Naive thymus-derived CD4-positive, alpha-beta T cell (primary cell): ENCODE measurements at regions of chr17 and their contacts with region 1.

Region 1: GRCh38 chr17:57747221-57748017 is 2.3 kb upstream of the CCDC182 start:
- DNase-seq: peak in 8 of 9 donors; percentile 18 to 65 (median 50)
- ATAC-seq: peak; percentile 66
- H3K4me3 ChIP-seq: no peak overlapping the region
- H3K4me3 Mint-ChIP-seq: no peak overlapping the region
- H3K27ac ChIP-seq: no peak overlapping the region
- H3K27ac Mint-ChIP-seq: peak overlapping the region in 1 of 9 donors; percentile 2
- H3K4me1 ChIP-seq: no peaks in the 10 kb centered on the region
- H3K4me1 Mint-ChIP-seq: peaks cover 0 to 6% (median 0%) of the 10 kb centered on the region in 7 donors
- H3K27me3 ChIP-seq: no peaks in the 10 kb centered on the region
- H3K27me3 Mint-ChIP-seq: peaks cover 0 to 15% (median 4%) of the 10 kb centered on the region in 5 donors

Region 2: GRCh38 chr17:57130761-57131461 is 616.5 kb before region 1 on chr17:
- CTCF ChIA-PET with region 1: interaction called, 4 read pairs
- POLR2A ChIA-PET with region 1: no interaction called
- intact Hi-C with region 1: loop called (anchors 1 to 2 kb)
- DNase-seq: peak; percentile 53 to 82 (median 75)
- ATAC-seq: peak; percentile 96
- H3K4me3 ChIP-seq: no peak overlapping the region
- H3K4me3 Mint-ChIP-seq: peak overlapping the region in 5 of 10 donors; percentile 14 to 53 (median 46)
- H3K27ac ChIP-seq: no peak overlapping the region
- H3K27ac Mint-ChIP-seq: no peak overlapping the region
- H3K4me1 ChIP-seq: peaks cover 0 to 6% of the 10 kb centered on the region in 2 donors
- H3K4me1 Mint-ChIP-seq: peaks cover 4 to 11% (median 8%) of the 10 kb centered on the region in 7 donors
- H3K27me3 ChIP-seq: no peaks in the 10 kb centered on the region
- H3K27me3 Mint-ChIP-seq: no peaks in the 10 kb centered on the region

Region 3: GRCh38 chr17:57552114-57552624 is 195.2 kb before region 1 on chr17:
- CTCF ChIA-PET with region 1: interaction called, 3 read pairs
- POLR2A ChIA-PET with region 1: no interaction called
- intact Hi-C with region 1: loop called in 1 of 2 experiments (anchors 1 kb)
- DNase-seq: peak in 4 of 9 donors; percentile 11 to 40 (median 20)
- ATAC-seq: peak; percentile 41
- H3K4me3 ChIP-seq: no peak overlapping the region
- H3K4me3 Mint-ChIP-seq: peak overlapping the region in 6 of 10 donors; percentile 24 to 62 (median 38)
- H3K27ac ChIP-seq: no peak overlapping the region
- H3K27ac Mint-ChIP-seq: peak overlapping the region in 7 of 9 donors; percentile 13 to 81 (median 59)
- H3K4me1 ChIP-seq: peaks cover 4 to 19% of the 10 kb centered on the region in 2 donors
- H3K4me1 Mint-ChIP-seq: peaks cover 20 to 74% (median 61%) of the 10 kb centered on the region in 7 donors
- H3K27me3 ChIP-seq: no peaks in the 10 kb centered on the region
- H3K27me3 Mint-ChIP-seq: no peaks in the 10 kb centered on the region

Region 4: GRCh38 chr17:57597531-57598453 is 149.6 kb before region 1 on chr17:
- CTCF ChIA-PET with region 1: interaction called, 9 read pairs
- POLR2A ChIA-PET with region 1: no interaction called
- intact Hi-C with region 1: loop called (anchors 1 to 5 kb)
- DNase-seq: peak in 2 of 9 donors; percentile 14 to 19
- ATAC-seq: peak; percentile 55
- H3K4me3 ChIP-seq: no peak overlapping the region
- H3K4me3 Mint-ChIP-seq: peak overlapping the region in 5 of 10 donors; percentile 15 to 69 (median 25)
- H3K27ac ChIP-seq: peak overlapping the region; percentile 34
- H3K27ac Mint-ChIP-seq: peak overlapping the region; percentile 66 to 97 (median 94)
- H3K4me1 ChIP-seq: peaks cover 48 to 53% of the 10 kb centered on the region in 2 donors
- H3K4me1 Mint-ChIP-seq: peaks cover 44 to 65% (median 55%) of the 10 kb centered on the region in 7 donors
- H3K27me3 ChIP-seq: no peaks in the 10 kb centered on the region
- H3K27me3 Mint-ChIP-seq: no peaks in the 10 kb centered on the region

Region 5: DNA sequence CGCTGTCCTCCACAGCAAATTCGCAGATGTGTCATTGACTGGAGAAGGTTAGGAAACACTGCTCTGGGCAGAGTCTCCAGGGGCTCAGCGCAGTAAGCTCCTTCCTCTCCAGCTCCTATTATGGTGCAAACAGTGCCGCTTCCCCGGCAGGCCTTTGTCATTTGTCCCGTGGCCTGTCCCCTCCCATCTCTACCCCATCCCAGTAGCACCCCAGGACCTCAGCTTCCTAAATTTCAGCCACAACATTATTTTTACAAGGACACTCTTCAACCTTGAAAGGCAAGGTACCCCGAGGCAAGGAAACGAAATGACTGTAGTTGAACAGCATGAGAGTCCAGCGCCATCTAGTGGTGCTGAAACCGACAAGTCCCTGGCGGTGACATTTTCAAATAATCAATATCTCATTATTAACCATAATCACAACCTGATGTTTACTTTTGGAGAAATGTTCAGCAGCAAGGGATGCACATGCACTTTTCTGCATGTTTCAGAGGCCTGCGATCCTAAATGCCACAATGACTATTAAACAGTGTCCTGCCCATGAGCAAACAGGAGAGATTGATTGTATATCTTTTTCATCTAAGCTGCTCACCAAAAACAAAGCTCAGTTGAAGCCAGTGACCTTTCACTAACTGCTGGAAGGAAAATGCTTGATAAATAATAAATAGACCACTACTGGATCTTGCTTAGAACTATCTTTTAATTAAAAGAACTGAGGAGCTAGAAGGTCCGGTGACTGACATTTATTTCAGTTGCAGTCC is 85.9 kb after region 1 on chr17:
- CTCF ChIA-PET with region 1: no interaction called
- POLR2A ChIA-PET with region 1: no interaction called
- intact Hi-C with region 1: loop called in 1 of 2 experiments (anchors 1 kb)
- DNase-seq: peak; percentile 29 to 68 (median 58)
- ATAC-seq: peak; percentile 86
- H3K4me3 ChIP-seq: peak overlapping the region; percentile 29
- H3K4me3 Mint-ChIP-seq: no peak overlapping the region
- H3K27ac ChIP-seq: peak overlapping the region; percentile 8
- H3K27ac Mint-ChIP-seq: no peak overlapping the region
- H3K4me1 ChIP-seq: no peaks in the 10 kb centered on the region
- H3K4me1 Mint-ChIP-seq: peaks cover 0 to 13% (median 4%) of the 10 kb centered on the region in 7 donors
- H3K27me3 ChIP-seq: no peaks in the 10 kb centered on the region
- H3K27me3 Mint-ChIP-seq: no peaks in the 10 kb centered on the region

Region 6: DNA sequence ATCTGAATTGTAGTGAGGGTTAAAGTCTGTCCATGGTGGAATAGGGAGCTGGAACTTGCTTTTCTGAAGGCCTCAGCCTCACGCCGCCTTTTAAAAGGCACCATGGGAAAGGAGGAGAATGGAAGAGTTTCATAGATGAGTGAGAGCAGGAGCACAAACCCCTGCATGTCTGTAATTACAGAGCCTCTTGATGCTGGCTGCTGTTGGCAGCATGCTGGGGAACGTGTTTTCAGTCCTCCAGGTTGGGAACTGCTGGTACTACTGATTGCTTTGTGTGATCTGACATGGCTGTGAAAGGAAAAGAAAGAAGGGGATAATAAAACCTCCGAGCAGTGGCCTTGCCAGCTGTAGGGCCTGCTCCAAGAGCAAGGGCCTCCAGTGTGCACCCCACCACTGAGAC is 319.0 kb after region 1 on chr17:
- CTCF ChIA-PET with region 1: no interaction called
- POLR2A ChIA-PET with region 1: no interaction called
- intact Hi-C with region 1: no loop called
- DNase-seq: no peak
- ATAC-seq: no peak
- H3K4me3 ChIP-seq: no peak overlapping the region
- H3K4me3 Mint-ChIP-seq: no peak overlapping the region
- H3K27ac ChIP-seq: no peak overlapping the region
- H3K27ac Mint-ChIP-seq: no peak overlapping the region
- H3K4me1 ChIP-seq: no peaks in the 10 kb centered on the region
- H3K4me1 Mint-ChIP-seq: no peaks in the 10 kb centered on the region
- H3K27me3 ChIP-seq: no peaks in the 10 kb centered on the region
- H3K27me3 Mint-ChIP-seq: peaks cover 9 to 31% (median 15%) of the 10 kb centered on the region in 5 donors